Breast epithelium (tissue), 4 donors: ENCODE measurements at regions of chr7 and their contacts with region 1.

Region 1: GRCh38 chr7:143008007-143008901 is 18.7 kb downstream of the OR9A2 start:
- DNase-seq: peak; percentile 72 to 84
- H3K4me3 ChIP-seq: no peak overlapping the region
- H3K27ac ChIP-seq: no peak overlapping the region
- H3K4me1 ChIP-seq: no peaks in the 10 kb centered on the region
- H3K27me3 ChIP-seq: no peaks in the 10 kb centered on the region
- CTCF ChIP-seq: peak; percentile 97 to 99 (median 98)
- POLR2A ChIP-seq: no peak

Region 2: GRCh38 chr7:143214789-143215679 is 206.8 kb after region 1 on chr7:
- intact Hi-C with region 1: loop called (anchors 5 kb)
- DNase-seq: peak in 1 of 2 donors; percentile 35
- H3K4me3 ChIP-seq: no peak overlapping the region
- H3K27ac ChIP-seq: no peak overlapping the region
- H3K4me1 ChIP-seq: no peaks in the 10 kb centered on the region
- H3K27me3 ChIP-seq: no peaks in the 10 kb centered on the region
- CTCF ChIP-seq: peak; percentile 99 to 100 (median 100)
- POLR2A ChIP-seq: no peak